ENCODE measurements at regions of chr11 and their contacts with region 1.

Region 1: GRCh38 chr11:10653926-10654810 is 39.4 kb downstream of the IRAG1 start:
- DNase-seq: peak; percentile 67
- ATAC-seq: peak; percentile 28; the same call in 1 of the 2 replicates
- H3K4me3 ChIP-seq: no peak overlapping the region
- H3K27ac ChIP-seq: no peak overlapping the region
- H3K4me1 ChIP-seq: peaks cover 45% of the 10 kb centered on the region
- H3K27me3 ChIP-seq: no peaks in the 10 kb centered on the region
- CTCF ChIP-seq: peak; percentile 61
- POLR2A ChIP-seq: no peak
- RAD21 ChIP-seq: peak; percentile 77

Region 2: GRCh38 chr11:10514210-10514609 is 140.0 kb before region 1 on chr11:
- CTCF ChIA-PET with region 1: no interaction called
- POLR2A ChIA-PET with region 1: no interaction called
- dilution Hi-C with region 1: no loop called
- in situ Hi-C with region 1: no loop called
- intact Hi-C with region 1: loop called (anchors 1 kb)
- DNase-seq: peak; percentile 49
- ATAC-seq: no peak
- H3K4me3 ChIP-seq: no peak overlapping the region
- H3K27ac ChIP-seq: no peak overlapping the region
- H3K4me1 ChIP-seq: peaks cover 4% of the 10 kb centered on the region; the same call in 1 of the 2 replicates
- H3K27me3 ChIP-seq: no peaks in the 10 kb centered on the region
- CTCF ChIP-seq: peak; percentile 46
- POLR2A ChIP-seq: no peak
- RAD21 ChIP-seq: peak; percentile 48